ENCODE measurements at regions of chr2 and their contacts with region 1.

Region 1: GRCh38 chr2:54899576-54900200 is 150.6 kb downstream of the RTN4 start:
- DNase-seq: peak; percentile 72
- H3K4me3 Mint-ChIP-seq: no peak overlapping the region
- H3K27ac Mint-ChIP-seq: no peak overlapping the region
- H3K4me1 Mint-ChIP-seq: peaks cover 13% of the 10 kb centered on the region
- H3K27me3 Mint-ChIP-seq: no peaks in the 10 kb centered on the region
- CTCF ChIP-seq: peak; percentile 65

Region 2: GRCh38 chr2:54271843-54272627 is 627.7 kb before region 1 on chr2:
- CTCF ChIA-PET with region 1: no interaction called
- POLR2A ChIA-PET with region 1: no interaction called
- intact Hi-C with region 1: no loop called
- DNase-seq: no peak
- H3K4me3 Mint-ChIP-seq: no peak overlapping the region
- H3K27ac Mint-ChIP-seq: no peak overlapping the region
- H3K4me1 Mint-ChIP-seq: no peaks in the 10 kb centered on the region
- H3K27me3 Mint-ChIP-seq: no peaks in the 10 kb centered on the region
- CTCF ChIP-seq: no peak

Region 3: DNA sequence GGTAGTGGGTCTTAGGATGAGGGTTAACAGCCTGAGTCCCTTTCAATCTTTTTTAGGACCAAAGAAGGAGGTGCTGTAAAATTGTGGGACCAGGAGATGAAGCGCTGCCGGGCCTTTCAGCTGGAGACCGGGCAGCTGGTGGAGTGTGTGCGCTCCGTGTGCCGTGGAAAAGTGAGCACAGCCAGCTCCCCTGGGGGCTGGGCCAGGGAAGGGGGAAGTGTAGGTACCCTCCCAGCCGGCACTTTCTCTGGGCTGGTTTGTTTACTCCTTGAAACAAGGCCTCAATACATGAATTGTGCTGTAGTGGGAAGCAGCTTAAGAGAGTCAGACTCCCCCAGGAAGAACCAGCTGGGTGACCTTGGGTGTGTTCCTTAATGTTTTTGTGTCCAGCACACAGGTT is 60.5 kb after region 1 on chr2:
- CTCF ChIA-PET with region 1: interaction called, 12 read pairs
- POLR2A ChIA-PET with region 1: interaction called, 8 read pairs
- intact Hi-C with region 1: no loop called
- DNase-seq: no peak
- H3K4me3 Mint-ChIP-seq: no peak overlapping the region
- H3K27ac Mint-ChIP-seq: no peak overlapping the region
- H3K4me1 Mint-ChIP-seq: peaks cover 15% of the 10 kb centered on the region
- H3K27me3 Mint-ChIP-seq: no peaks in the 10 kb centered on the region
- CTCF ChIP-seq: no peak

Region 4: GRCh38 chr2:54977149-54977548 is 77.5 kb after region 1 on chr2:
- CTCF ChIA-PET with region 1: interaction called, 20 read pairs
- POLR2A ChIA-PET with region 1: interaction called, 3 read pairs
- intact Hi-C with region 1: no loop called
- DNase-seq: no peak
- H3K4me3 Mint-ChIP-seq: no peak overlapping the region
- H3K27ac Mint-ChIP-seq: no peak overlapping the region
- H3K4me1 Mint-ChIP-seq: peaks cover 21% of the 10 kb centered on the region
- H3K27me3 Mint-ChIP-seq: no peaks in the 10 kb centered on the region
- CTCF ChIP-seq: no peak

Region 5: GRCh38 chr2:55014962-55015939 is 115.6 kb after region 1 on chr2:
- CTCF ChIA-PET with region 1: interaction called, 160 read pairs
- POLR2A ChIA-PET with region 1: interaction called, 136 read pairs
- intact Hi-C with region 1: loop called (anchors 1 kb)
- DNase-seq: peak; percentile 82
- H3K4me3 Mint-ChIP-seq: peak overlapping the region; percentile 58
- H3K27ac Mint-ChIP-seq: peak overlapping the region; percentile 86
- H3K4me1 Mint-ChIP-seq: peaks cover 46% of the 10 kb centered on the region
- H3K27me3 Mint-ChIP-seq: no peaks in the 10 kb centered on the region
- CTCF ChIP-seq: peak; percentile 56

Region 6: DNA sequence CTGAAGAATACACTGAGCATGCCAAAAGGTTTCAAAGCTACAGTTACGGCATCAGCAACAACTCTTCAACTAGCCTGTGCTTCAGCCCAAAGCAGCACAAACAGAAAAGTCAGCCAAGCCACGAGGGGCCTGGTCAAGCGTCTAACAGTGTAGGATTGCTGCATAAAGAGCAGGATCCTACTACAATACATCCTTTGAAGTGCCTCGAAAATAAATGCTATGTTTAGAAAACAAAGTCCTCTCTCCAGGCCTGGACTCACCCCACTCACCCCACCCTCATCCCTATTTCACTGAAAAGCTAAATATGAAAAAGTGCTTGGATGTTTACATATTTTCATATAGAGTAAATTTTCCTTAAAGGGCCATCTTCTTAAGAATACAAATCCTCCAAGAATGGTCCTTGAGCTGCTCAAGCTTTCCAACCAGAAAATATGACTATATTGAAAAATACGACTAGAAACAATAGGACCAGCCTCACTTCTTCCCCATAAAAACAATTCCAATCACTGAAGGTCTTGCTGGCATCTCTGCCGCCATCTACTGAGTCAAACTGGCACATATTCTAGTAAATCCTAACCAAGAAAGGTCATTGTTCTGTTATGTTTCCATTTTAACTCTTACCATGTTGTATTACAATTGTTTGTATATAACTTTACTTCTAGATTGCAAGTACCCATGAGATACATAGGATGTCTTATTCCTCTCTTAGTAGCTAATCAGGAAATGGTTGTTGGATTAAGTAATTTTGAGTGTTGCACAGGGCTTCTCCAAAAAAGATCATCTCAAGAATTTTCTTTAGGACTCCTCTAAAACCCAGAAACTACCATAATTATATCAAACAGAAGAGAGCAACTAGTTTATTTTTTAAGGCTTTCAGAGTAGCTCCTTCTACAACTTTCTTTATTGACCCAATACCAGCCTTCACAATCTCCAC is 268.8 kb after region 1 on chr2:
- CTCF ChIA-PET with region 1: interaction called, 98 read pairs
- POLR2A ChIA-PET with region 1: interaction called, 14 read pairs
- intact Hi-C with region 1: loop called (anchors 1 kb)
- DNase-seq: peak; percentile 72
- H3K4me3 Mint-ChIP-seq: no peak overlapping the region
- H3K27ac Mint-ChIP-seq: no peak overlapping the region
- H3K4me1 Mint-ChIP-seq: peaks cover 13% of the 10 kb centered on the region
- H3K27me3 Mint-ChIP-seq: no peaks in the 10 kb centered on the region
- CTCF ChIP-seq: peak; percentile 81

Region 7: DNA sequence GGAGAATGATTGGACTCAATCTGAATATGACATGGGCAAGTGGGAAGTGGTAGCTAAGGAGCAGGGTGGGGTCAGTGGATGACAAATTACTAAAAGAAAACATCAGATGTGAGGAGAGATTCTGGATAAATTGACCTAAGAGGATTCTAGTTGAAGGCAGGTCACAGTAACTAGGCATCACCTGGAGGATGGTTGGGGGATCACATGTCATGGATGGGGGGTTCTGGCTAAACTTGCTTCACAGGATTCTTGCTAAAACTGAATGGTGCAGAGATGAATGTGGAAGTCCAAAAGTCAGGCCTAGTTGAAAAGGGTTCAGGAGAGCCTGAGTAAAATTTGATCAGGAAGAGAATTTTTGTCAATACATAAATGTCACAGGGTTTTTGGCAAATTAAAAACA is 314.1 kb after region 1 on chr2:
- CTCF ChIA-PET with region 1: no interaction called
- POLR2A ChIA-PET with region 1: no interaction called
- intact Hi-C with region 1: no loop called
- DNase-seq: no peak
- H3K4me3 Mint-ChIP-seq: no peak overlapping the region
- H3K27ac Mint-ChIP-seq: no peak overlapping the region
- H3K4me1 Mint-ChIP-seq: peaks cover 7% of the 10 kb centered on the region
- H3K27me3 Mint-ChIP-seq: no peaks in the 10 kb centered on the region
- CTCF ChIP-seq: no peak

Region 8: DNA sequence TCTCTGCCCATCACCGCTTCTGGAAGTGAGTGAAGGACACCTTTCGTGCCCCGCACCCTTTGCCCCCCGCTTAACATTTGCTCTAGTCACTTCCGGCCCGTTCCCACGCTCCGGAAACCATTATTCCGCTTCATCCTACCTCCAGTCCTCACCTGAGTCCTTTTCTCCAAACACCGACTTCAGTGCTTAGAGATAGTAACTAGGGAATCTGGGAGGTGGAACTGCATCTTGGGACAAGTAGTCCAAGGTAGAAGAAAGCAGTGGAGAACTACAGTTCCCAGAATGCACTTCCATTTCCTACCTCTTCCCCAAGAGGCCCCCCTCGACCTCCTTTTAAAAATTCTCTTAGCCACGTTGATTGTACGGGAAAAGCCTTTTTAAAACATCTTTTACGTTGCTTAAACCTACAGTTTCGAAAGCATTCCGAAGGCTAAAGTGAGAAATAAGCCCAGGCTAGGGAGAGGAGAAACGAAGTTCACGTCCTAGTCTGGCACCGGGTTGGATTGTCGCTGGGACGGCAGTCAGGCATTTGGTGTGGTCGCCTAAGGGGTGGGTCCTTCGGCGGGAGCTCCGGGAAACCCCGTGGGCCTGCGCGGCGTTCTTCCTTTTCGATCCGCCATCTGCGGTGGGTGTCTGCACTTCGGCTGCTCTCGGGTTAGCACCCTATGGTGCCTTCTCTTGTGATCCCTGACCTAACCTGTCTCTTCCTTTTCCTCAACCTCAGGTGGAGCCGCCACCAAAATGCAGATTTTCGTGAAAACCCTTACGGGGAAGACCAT is 332.6 kb after region 1 on chr2 and contains the starts of genes CLHC1 and RPS27A:
- CTCF ChIA-PET with region 1: no interaction called
- POLR2A ChIA-PET with region 1: interaction called, 3 read pairs
- intact Hi-C with region 1: loop called (anchors 5 kb)
- DNase-seq: peak; percentile 97
- H3K4me3 Mint-ChIP-seq: peak within 1 kb of the TSS; percentile 87
- H3K27ac Mint-ChIP-seq: peak within 1 kb of the TSS; percentile 96
- H3K4me1 Mint-ChIP-seq: peaks cover 36% of the 10 kb centered on the region
- H3K27me3 Mint-ChIP-seq: no peaks in the 10 kb centered on the region
- CTCF ChIP-seq: no peak
- total RNA-seq, gene CLHC1: 32.8 and 35.4 TPM in 2 replicates
- total RNA-seq, gene RPS27A: 1,343 and 1,536 TPM in 2 replicates

Measured in MCF 10A (cell line).